ENCODE measurements at regions of chr13 and their contacts with region 1.

Region 1: GRCh38 chr13:102596147-102597028 is at the start of gene TPP2:
- DNase-seq: peak; percentile 99
- ATAC-seq: peak; percentile 85
- H3K4me3 Mint-ChIP-seq: peak within 1 kb of the TSS; percentile 96
- H3K27ac Mint-ChIP-seq: peak within 1 kb of the TSS; percentile 99
- H3K4me1 Mint-ChIP-seq: peaks cover 48% of the 10 kb centered on the region
- H3K27me3 Mint-ChIP-seq: no peaks in the 10 kb centered on the region
- CTCF ChIP-seq: no peak
- total RNA-seq, gene TPP2: 52.9 to 68.3 TPM (median 57.5 TPM) in 3 replicates

Region 2: GRCh38 chr13:102536695-102537485 is 59.5 kb before region 1 on chr13:
- CTCF ChIA-PET with region 1: no interaction called
- POLR2A ChIA-PET with region 1: no interaction called
- DNase-seq: no peak
- ATAC-seq: no peak
- H3K4me3 Mint-ChIP-seq: no peak overlapping the region
- H3K27ac Mint-ChIP-seq: no peak overlapping the region
- H3K4me1 Mint-ChIP-seq: 0 out of 2 replicates have a peak, but pooled peaks cover 2% of the 10 kb centered on the region
- H3K27me3 Mint-ChIP-seq: no peaks in the 10 kb centered on the region
- CTCF ChIP-seq: no peak

Region 3: DNA sequence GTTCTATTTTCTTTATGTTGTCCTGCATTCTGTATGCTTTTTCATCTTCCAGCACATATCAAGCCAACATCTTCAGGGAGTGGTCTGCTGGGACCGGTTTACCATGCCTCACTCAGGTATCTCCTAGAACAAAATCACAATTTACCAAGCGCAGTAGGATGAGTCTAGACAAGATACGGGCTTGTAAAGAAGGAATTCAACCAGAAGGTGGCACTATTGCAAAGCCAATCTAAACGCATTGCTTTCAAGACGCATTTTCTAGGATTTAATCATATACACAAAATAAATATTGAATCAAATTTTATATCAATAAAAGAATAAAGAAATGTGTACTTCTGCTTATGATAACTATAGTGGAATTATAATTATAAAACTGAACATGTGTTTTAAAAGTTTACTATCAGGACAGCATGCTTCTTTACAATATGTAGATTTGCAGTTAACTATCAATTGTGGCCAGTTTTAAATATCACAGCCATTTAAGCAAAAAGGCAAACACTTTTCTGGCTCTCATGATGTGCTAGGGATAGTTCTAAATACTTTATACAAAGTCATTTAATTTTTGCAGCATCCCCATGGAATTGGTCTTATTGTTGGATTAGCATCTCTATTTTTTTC is 15.7 kb before region 1 on chr13:
- CTCF ChIA-PET with region 1: interaction called, 10 read pairs
- POLR2A ChIA-PET with region 1: interaction called, 4 read pairs
- DNase-seq: no peak
- ATAC-seq: peak; percentile 78
- H3K4me3 Mint-ChIP-seq: no peak overlapping the region
- H3K27ac Mint-ChIP-seq: no peak overlapping the region
- H3K4me1 Mint-ChIP-seq: 0 out of 2 replicates have a peak, but pooled peaks cover 4% of the 10 kb centered on the region
- H3K27me3 Mint-ChIP-seq: no peaks in the 10 kb centered on the region; the same call in 1 of the 2 replicates
- CTCF ChIP-seq: peak; percentile 65

Region 4: GRCh38 chr13:102651892-102652291 is 55.5 kb after region 1 on chr13:
- CTCF ChIA-PET with region 1: no interaction called
- POLR2A ChIA-PET with region 1: no interaction called
- DNase-seq: no peak
- ATAC-seq: no peak
- H3K4me3 Mint-ChIP-seq: no peak overlapping the region
- H3K27ac Mint-ChIP-seq: no peak overlapping the region
- H3K4me1 Mint-ChIP-seq: no peaks in the 10 kb centered on the region
- H3K27me3 Mint-ChIP-seq: no peaks in the 10 kb centered on the region
- CTCF ChIP-seq: no peak

Region 5: GRCh38 chr13:102800145-102801041 is 204.0 kb after region 1 on chr13:
- CTCF ChIA-PET with region 1: interaction called, 16 read pairs
- POLR2A ChIA-PET with region 1: interaction called, 4 read pairs
- DNase-seq: peak; percentile 86
- ATAC-seq: peak; percentile 72
- H3K4me3 Mint-ChIP-seq: peak overlapping the region; percentile 97
- H3K27ac Mint-ChIP-seq: no peak overlapping the region
- H3K4me1 Mint-ChIP-seq: peaks cover 9% of the 10 kb centered on the region; the same call in 1 of the 2 replicates
- H3K27me3 Mint-ChIP-seq: peaks cover 18% of the 10 kb centered on the region
- CTCF ChIP-seq: peak; percentile 61

Region 6: DNA sequence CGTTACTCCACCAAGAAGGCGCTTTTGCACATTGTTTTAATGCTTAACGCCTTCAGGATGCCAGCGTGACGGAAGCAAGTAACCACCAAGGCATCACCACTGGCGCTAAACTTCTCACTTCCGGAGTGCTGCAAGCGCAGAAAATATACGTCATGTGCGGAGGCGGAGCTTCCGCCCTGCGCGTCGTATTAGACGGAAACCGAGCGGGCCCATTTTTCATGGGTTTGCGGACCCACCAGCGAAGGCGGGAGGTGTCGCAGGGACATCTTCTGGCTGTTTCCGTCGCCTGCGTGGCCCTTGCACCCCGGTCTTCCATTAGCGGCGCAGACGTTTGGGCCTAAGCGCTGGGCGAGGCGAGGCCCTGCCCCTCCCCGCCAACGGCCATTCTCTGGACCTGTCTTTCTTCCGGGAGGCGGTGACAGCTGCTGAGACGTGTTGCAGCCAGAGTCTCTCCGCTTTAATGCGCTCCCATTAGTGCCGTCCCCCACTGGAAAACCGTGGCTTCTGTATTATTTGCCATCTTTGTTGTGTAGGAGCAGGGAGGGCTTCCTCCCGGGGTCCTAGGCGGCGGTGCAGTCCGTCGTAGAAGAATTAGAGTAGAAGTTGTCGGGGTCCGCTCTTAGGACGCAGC is 249.4 kb after region 1 on chr13 and contains the start of gene ERCC5:
- CTCF ChIA-PET with region 1: interaction called, 17 read pairs
- POLR2A ChIA-PET with region 1: interaction called, 15 read pairs
- DNase-seq: peak; percentile 90
- ATAC-seq: peak; percentile 82
- H3K4me3 Mint-ChIP-seq: peak within 1 kb of the TSS; percentile 95
- H3K27ac Mint-ChIP-seq: peak within 1 kb of the TSS; percentile 95
- H3K4me1 Mint-ChIP-seq: peaks cover 12% of the 10 kb centered on the region
- H3K27me3 Mint-ChIP-seq: no peaks in the 10 kb centered on the region
- CTCF ChIP-seq: no peak
- total RNA-seq, gene ERCC5: 15.6 to 26.5 TPM (median 20.3 TPM) in 3 replicates

Measured in WTC11 (cell line).